Naive thymus-derived CD8-positive, alpha-beta T cell (primary cell): ENCODE measurements at regions of chr11 and their contacts with region 1.

Region 1: GRCh38 chr11:57335343-57336110 is at the start of gene SSRP1:
- DNase-seq: peak; percentile 74 to 93 (median 84)
- ATAC-seq: peak; percentile 97 to 98
- H3K4me3 Mint-ChIP-seq: peak within 1 kb of the TSS; percentile 87 to 98 (median 93)
- H3K27ac Mint-ChIP-seq: peak within 1 kb of the TSS; percentile 95 to 100 (median 99)
- H3K4me1 Mint-ChIP-seq: peaks cover 13 to 39% (median 31%) of the 10 kb centered on the region in 4 donors
- H3K27me3 Mint-ChIP-seq: no peaks in the 10 kb centered on the region
- polyA plus RNA-seq, gene SSRP1: 35.9 to 41.0 (median 38.0) TPM

Region 2: GRCh38 chr11:57249384-57250319 is 85.9 kb before region 1 on chr11:
- POLR2A ChIA-PET with region 1: no interaction called
- DNase-seq: peak in 6 of 10 donors; percentile 8 to 36 (median 26)
- ATAC-seq: no peak
- H3K4me3 Mint-ChIP-seq: no peak overlapping the region
- H3K27ac Mint-ChIP-seq: no peak overlapping the region
- H3K4me1 Mint-ChIP-seq: peaks cover 5 to 9% (median 6%) of the 10 kb centered on the region in 4 donors
- H3K27me3 Mint-ChIP-seq: peaks cover 19 to 44% (median 27%) of the 10 kb centered on the region in 5 donors

Region 3: GRCh38 chr11:57303990-57304579 is 31.4 kb before region 1 on chr11:
- POLR2A ChIA-PET with region 1: no interaction called
- DNase-seq: peak in 1 of 10 donors; percentile 50
- ATAC-seq: no peak
- H3K4me3 Mint-ChIP-seq: no peak overlapping the region
- H3K27ac Mint-ChIP-seq: no peak overlapping the region
- H3K4me1 Mint-ChIP-seq: peaks cover 0 to 6% (median 3%) of the 10 kb centered on the region in 4 donors
- H3K27me3 Mint-ChIP-seq: no peaks in the 10 kb centered on the region

Region 4: DNA sequence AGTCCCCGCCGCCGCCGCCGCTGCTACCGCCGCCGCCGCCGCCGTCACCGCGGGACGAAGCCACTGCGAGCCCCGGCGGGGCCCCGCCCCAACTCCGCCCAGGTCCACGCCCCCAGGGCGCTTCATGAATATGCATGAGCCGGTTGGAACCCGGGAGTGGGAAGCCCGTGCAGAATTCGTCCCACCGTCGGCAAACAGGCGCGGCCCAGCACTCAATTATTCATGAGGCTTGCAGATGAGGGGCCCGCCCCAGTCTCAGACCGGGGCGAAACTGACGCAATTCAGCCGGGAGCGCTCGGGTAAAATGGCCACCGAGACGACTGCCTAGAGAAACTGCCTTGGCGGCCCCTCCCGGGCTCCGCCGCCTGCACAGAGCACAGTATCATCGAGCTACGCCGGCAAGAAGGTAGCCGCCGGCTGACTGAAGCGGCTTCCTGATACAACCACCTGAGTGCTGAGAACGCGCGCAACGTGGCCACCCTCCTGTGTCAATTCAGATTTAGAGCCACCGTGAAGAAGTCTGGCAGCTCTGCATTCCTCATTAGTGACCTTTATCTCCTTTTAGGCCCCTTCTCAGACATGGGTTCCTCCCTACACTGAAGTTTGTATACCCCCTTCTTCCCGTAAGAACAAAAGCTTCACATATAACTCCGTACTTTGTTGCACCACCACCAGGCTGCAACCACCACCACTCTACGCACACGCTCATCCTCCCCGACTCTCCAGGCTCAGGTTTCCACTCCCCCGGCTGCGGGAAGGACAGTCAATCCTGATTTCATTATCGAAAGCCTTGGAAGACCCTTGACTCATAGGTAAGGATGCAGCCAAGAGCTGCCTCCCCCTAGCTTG is 10.4 kb before region 1 on chr11 and contains the start of gene TNKS1BP1:
- POLR2A ChIA-PET with region 1: interaction called, 96 read pairs
- DNase-seq: peak; percentile 77 to 95 (median 86)
- ATAC-seq: peak; percentile 88 to 90
- H3K4me3 Mint-ChIP-seq: peak within 1 kb of the TSS; percentile 82 to 95 (median 93)
- H3K27ac Mint-ChIP-seq: peak within 1 kb of the TSS; percentile 95 to 100 (median 98)
- H3K4me1 Mint-ChIP-seq: peaks cover 39 to 52% (median 43%) of the 10 kb centered on the region in 4 donors
- H3K27me3 Mint-ChIP-seq: no peaks in the 10 kb centered on the region
- polyA plus RNA-seq, gene TNKS1BP1: 0.97 to 6.7 (median 2.5) TPM